K562 (cell line): ENCODE measurements at regions of chr15 and their contacts with region 1.

Region 1: GRCh38 chr15:57861036-57861638 is 154.6 kb downstream of the POLR2M start:
- DNase-seq: peak; percentile 34 to 74 (median 46)
- ATAC-seq: peak; percentile 76
- H3K4me3 ChIP-seq: no peak overlapping the region
- H3K27ac ChIP-seq: no peak overlapping the region
- H3K4me1 ChIP-seq: no peaks in the 10 kb centered on the region
- H3K27me3 ChIP-seq: peaks cover 4 to 8% of the 10 kb centered on the region in 2 experiments
- CTCF ChIP-seq: peak; percentile 66 to 77 (median 72)
- EP300 ChIP-seq: no peak
- POLR2A ChIP-seq: no peak
- RAD21 ChIP-seq: peak; percentile 66 to 83

Region 2: DNA sequence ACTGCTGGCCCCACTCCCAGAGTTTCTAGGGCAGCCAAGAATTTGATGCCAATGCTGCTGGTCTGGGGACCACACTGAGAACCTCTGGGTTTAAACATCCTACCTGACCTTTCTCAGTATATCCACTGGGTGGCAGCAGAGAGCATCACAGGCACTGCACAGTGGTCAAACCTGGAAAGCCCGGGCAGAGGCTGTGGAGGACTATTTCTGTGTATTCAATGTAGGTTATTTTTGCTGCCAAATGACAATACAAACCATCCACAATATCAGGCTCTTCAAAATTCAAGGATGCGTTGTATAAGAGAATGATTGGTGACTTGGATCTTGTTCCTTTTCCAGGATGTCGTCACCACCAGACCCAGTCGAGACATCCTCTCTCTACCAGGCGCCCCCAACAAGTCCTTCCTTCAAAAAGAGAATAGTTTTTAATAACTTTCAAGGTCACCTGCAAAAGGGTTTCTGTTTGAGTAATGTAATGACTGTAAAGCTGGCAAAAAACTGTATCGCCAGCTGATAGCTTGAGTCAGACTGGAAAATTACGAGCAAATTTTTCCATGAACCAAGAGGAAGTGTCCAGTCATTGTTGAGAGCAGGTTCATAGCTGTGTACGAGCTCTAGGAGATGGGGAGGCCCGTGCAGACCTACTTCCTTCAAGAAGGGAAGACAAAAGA is 300.0 kb before region 1 on chr15:
- CTCF ChIA-PET with region 1: interaction called, 3 read pairs
- POLR2A ChIA-PET with region 1: no interaction called
- in situ Hi-C with region 1: no loop called
- intact Hi-C with region 1: loop called (anchors 2 kb)
- DNase-seq: peak; percentile 71 to 82 (median 76)
- ATAC-seq: peak; percentile 98
- H3K4me3 ChIP-seq: no peak overlapping the region
- H3K27ac ChIP-seq: no peak overlapping the region
- H3K4me1 ChIP-seq: no peaks in the 10 kb centered on the region; a peak in 1 of 5 replicates
- H3K27me3 ChIP-seq: peaks cover 10 to 35% of the 10 kb centered on the region in 2 experiments
- CTCF ChIP-seq: peak; percentile 83 to 93 (median 84)
- EP300 ChIP-seq: no peak
- POLR2A ChIP-seq: no peak
- RAD21 ChIP-seq: peak; percentile 56 to 78

Region 3: GRCh38 chr15:57640935-57641682 is 220.0 kb before region 1 on chr15:
- CTCF ChIA-PET with region 1: no interaction called
- POLR2A ChIA-PET with region 1: no interaction called
- in situ Hi-C with region 1: no loop called
- intact Hi-C with region 1: loop called (anchors 2 kb)
- DNase-seq: peak; percentile 19 to 43 (median 27)
- ATAC-seq: peak; percentile 81
- H3K4me3 ChIP-seq: no peak overlapping the region
- H3K27ac ChIP-seq: no peak overlapping the region
- H3K4me1 ChIP-seq: no peaks in the 10 kb centered on the region
- H3K27me3 ChIP-seq: peaks cover 13 to 14% of the 10 kb centered on the region in 2 experiments
- CTCF ChIP-seq: peak; percentile 45 to 49 (median 46); a peak in 5 of 6 replicates
- EP300 ChIP-seq: no peak
- POLR2A ChIP-seq: no peak
- RAD21 ChIP-seq: peak in 1 of 2 experiments; percentile 55; a peak in 3 of 4 replicates

Region 4: DNA sequence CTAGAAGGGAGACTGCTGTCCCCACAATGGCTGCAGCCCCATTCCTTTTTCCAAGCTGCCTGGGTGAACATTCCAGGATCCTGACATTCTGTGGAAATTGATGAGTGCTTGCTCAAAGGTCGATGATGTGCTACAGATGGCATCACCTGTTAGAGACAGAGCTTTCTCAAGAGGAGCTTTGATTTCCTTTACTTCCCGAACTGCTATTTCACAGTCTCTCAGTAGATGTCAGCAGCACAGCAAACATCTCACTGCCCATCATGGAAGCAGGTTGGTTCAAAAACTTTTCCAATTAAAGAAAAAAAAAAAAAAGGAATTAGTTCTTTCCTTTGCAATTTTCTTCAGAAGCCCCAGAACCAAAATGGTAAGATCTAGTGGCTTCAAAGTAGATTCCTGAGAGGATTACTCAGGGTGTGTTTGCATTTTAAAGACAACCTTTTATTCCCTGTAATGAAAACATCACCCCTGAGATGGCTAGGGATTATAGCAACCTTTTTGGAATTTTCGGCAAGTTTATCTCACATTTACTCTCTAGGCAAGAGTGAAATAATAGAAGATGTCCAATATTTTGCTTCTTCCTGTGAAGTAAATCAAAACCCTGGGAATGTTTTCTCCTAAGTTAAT is 109.8 kb before region 1 on chr15:
- CTCF ChIA-PET with region 1: interaction called, 4 read pairs
- POLR2A ChIA-PET with region 1: no interaction called
- in situ Hi-C with region 1: no loop called
- intact Hi-C with region 1: loop called (anchors 2 kb)
- DNase-seq: peak in 1 of 4 experiments; percentile 23
- ATAC-seq: no peak
- H3K4me3 ChIP-seq: no peak overlapping the region
- H3K27ac ChIP-seq: no peak overlapping the region
- H3K4me1 ChIP-seq: peaks cover 0 to 2% of the 10 kb centered on the region in 2 experiments; a peak in 1 of 5 replicates
- H3K27me3 ChIP-seq: peaks cover 16 to 32% of the 10 kb centered on the region in 2 experiments; a peak in 4 of 5 replicates
- CTCF ChIP-seq: peak; percentile 28 to 56 (median 37); a peak in 2 of 6 replicates
- EP300 ChIP-seq: no peak
- POLR2A ChIP-seq: no peak
- RAD21 ChIP-seq: peak; percentile 52 to 69